ENCODE measurements at regions of chr1 and their contacts with region 1.

Region 1: DNA sequence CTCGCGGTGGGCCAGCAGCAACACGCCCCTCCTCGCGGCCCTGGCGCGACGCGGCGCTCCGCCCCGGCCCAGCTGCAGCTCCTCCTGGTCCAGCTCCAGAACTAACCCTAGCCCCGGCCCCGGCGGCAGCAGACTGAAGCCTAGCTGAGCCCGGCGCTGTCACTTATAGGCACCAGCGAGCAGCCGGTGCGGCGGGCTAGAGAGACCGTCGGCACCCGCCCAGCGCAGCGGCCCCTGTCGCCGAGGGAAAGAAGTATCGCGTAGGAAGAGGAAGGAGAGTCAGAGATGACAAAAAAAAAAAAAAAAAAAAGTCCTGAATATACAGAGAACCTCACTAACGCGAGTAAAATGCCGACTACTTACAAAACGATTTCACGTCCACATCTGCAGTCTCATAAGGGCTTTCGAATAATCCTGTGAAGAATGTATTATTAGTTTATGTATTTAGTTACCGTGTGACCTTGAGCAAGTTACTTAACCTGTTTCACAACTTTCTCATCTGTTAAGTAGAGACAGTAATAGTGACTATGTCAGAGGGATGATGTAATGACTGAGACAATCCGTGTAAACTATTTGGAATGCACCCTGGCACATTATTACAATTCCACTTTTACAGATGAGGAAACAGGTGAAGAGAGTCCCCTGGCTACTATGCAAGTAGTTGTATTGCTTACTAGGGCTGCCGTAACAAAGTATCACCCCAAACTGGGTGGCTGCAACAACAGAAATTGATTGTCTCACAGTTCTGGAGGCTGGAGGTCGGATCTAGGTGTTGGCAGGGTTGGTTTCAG is at the start of gene SLC9A1:
- DNase-seq: peak; percentile 88 to 96 (median 91)
- ATAC-seq: peak; percentile 94
- H3K4me3 ChIP-seq: peak within 1 kb of the TSS; percentile 75 to 83
- H3K4me3 Mint-ChIP-seq: peak within 1 kb of the TSS; percentile 81
- H3K27ac ChIP-seq: peak within 1 kb of the TSS; percentile 92 to 100
- H3K27ac Mint-ChIP-seq: peak within 1 kb of the TSS; percentile 99
- H3K4me1 ChIP-seq: peaks cover 40% of the 10 kb centered on the region
- H3K4me1 Mint-ChIP-seq: peaks cover 45% of the 10 kb centered on the region
- H3K27me3 ChIP-seq: no peaks in the 10 kb centered on the region
- H3K27me3 Mint-ChIP-seq: no peaks in the 10 kb centered on the region
- CTCF ChIP-seq: peak; percentile 82
- total RNA-seq, gene SLC9A1: 17.9 to 18.3 TPM

Region 2: DNA sequence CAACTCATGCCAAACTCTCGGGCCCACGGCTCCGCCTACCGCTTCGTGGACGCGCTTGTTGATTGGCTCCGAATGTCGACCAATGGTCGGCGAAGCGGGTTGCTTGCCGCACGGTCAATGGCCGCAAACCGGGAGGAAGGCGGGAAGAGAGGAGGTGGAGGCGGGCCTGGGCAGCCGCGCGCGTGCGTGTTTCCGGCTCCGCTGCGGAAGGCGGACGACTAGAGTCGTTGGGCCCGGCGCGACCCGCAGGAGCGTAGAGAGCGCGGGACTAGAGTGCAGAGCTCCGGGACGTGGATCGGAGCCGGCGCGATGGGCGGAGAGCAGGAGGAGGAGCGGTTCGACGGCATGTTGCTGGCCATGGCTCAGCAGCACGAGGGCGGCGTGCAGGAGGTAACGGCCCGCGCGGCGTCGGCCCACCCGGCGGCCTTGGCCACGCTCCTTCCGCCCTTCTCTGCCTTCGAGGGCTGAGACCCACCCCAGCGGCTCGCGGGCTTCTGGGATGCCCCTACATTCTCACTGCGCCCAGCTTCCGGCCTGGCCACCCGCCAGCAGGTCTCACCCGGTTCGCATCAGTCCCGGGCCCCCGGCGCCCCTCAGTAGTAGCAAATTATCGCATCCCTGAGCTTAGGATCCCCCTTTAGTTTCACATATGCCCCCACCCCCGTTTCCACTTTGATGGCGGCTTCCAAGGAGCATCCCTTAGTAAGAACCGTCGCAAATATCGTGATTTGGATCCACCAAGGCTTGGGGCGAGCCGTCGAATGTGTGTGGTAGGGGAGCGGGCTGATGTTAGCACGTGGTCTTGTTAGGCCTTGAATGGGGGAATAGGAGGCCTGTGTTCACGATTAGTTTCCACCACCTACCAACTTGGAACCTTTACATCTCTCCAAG is 233.4 kb before region 1 on chr1 and contains the start of gene NUDC:
- CTCF ChIA-PET with region 1: no interaction called
- POLR2A ChIA-PET with region 1: no interaction called
- intact Hi-C with region 1: loop called in 1 of 2 experiments (anchors 10 kb)
- DNase-seq: peak; percentile 91 to 98 (median 94)
- ATAC-seq: peak; percentile 92
- H3K4me3 ChIP-seq: peak within 1 kb of the TSS; percentile 84 to 95
- H3K4me3 Mint-ChIP-seq: peak within 1 kb of the TSS; percentile 95
- H3K27ac ChIP-seq: peak within 1 kb of the TSS; percentile 87 to 90
- H3K27ac Mint-ChIP-seq: peak within 1 kb of the TSS; percentile 99
- H3K4me1 ChIP-seq: peaks cover 23% of the 10 kb centered on the region
- H3K4me1 Mint-ChIP-seq: peaks cover 34% of the 10 kb centered on the region
- H3K27me3 ChIP-seq: no peaks in the 10 kb centered on the region
- H3K27me3 Mint-ChIP-seq: no peaks in the 10 kb centered on the region
- CTCF ChIP-seq: no peak
- total RNA-seq, gene NUDC: 51.9 to 55.0 TPM

Region 3: GRCh38 chr1:27136998-27137542 is 18.1 kb before region 1 on chr1:
- CTCF ChIA-PET with region 1: interaction called, 10 read pairs
- POLR2A ChIA-PET with region 1: interaction called, 112 read pairs
- intact Hi-C with region 1: loop called (anchors 1 kb)
- DNase-seq: peak; percentile 58 to 91 (median 81)
- ATAC-seq: peak; percentile 95
- H3K4me3 ChIP-seq: peak overlapping the region; percentile 41 to 45
- H3K4me3 Mint-ChIP-seq: peak overlapping the region; percentile 87
- H3K27ac ChIP-seq: peak overlapping the region; percentile 72 to 97
- H3K27ac Mint-ChIP-seq: peak overlapping the region; percentile 100
- H3K4me1 ChIP-seq: peaks cover 42% of the 10 kb centered on the region
- H3K4me1 Mint-ChIP-seq: peaks cover 61% of the 10 kb centered on the region
- H3K27me3 ChIP-seq: no peaks in the 10 kb centered on the region
- H3K27me3 Mint-ChIP-seq: no peaks in the 10 kb centered on the region
- CTCF ChIP-seq: no peak

Region 4: DNA sequence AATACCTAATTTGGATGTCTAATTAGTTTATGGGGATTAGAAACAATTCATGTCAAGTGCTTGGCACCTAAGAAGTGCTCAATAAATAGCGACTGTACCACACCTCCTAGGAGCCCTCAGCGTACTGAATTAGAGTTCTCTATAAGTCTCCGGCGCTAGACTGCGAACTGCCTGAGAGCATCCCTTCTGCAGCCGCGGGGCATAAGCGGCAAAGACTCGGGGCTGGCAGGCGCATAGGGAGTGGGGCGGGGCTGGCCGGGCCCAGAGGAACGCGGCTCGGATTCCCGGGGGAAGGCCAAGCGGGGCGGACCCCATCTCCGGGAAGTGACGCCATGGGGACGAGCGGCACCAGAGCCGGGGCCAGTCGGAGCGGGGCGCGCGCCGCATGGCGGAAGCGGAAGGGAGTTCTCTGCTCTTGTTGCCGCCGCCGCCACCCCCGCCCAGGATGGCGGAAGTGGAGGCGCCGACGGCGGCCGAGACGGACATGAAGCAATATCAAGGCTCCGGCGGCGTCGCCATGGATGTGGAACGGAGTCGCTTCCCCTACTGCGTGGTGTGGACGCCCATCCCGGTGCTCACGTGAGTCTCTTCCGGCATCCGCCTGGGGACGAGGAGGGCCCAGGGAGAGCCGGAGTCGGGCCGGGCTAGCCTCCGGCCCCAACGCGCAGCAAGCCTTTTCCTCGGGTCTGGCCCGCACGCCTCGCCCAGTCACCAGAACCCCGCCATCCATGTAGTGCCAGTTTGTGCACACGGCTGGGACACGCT is 166.8 kb after region 1 on chr1 and contains the start of gene TMEM222:
- CTCF ChIA-PET with region 1: no interaction called
- POLR2A ChIA-PET with region 1: no interaction called
- intact Hi-C with region 1: loop called (anchors 1 kb)
- DNase-seq: peak; percentile 95 to 99 (median 97)
- ATAC-seq: peak; percentile 93
- H3K4me3 ChIP-seq: peak within 1 kb of the TSS; percentile 95 to 99
- H3K4me3 Mint-ChIP-seq: peak within 1 kb of the TSS; percentile 98
- H3K27ac ChIP-seq: peak within 1 kb of the TSS; percentile 88 to 95
- H3K27ac Mint-ChIP-seq: peak within 1 kb of the TSS; percentile 97
- H3K4me1 ChIP-seq: peaks cover 40% of the 10 kb centered on the region
- H3K4me1 Mint-ChIP-seq: peaks cover 48% of the 10 kb centered on the region
- H3K27me3 ChIP-seq: no peaks in the 10 kb centered on the region
- H3K27me3 Mint-ChIP-seq: no peaks in the 10 kb centered on the region
- CTCF ChIP-seq: no peak
- total RNA-seq, gene TMEM222: 24.1 to 25.2 TPM

Region 5: DNA sequence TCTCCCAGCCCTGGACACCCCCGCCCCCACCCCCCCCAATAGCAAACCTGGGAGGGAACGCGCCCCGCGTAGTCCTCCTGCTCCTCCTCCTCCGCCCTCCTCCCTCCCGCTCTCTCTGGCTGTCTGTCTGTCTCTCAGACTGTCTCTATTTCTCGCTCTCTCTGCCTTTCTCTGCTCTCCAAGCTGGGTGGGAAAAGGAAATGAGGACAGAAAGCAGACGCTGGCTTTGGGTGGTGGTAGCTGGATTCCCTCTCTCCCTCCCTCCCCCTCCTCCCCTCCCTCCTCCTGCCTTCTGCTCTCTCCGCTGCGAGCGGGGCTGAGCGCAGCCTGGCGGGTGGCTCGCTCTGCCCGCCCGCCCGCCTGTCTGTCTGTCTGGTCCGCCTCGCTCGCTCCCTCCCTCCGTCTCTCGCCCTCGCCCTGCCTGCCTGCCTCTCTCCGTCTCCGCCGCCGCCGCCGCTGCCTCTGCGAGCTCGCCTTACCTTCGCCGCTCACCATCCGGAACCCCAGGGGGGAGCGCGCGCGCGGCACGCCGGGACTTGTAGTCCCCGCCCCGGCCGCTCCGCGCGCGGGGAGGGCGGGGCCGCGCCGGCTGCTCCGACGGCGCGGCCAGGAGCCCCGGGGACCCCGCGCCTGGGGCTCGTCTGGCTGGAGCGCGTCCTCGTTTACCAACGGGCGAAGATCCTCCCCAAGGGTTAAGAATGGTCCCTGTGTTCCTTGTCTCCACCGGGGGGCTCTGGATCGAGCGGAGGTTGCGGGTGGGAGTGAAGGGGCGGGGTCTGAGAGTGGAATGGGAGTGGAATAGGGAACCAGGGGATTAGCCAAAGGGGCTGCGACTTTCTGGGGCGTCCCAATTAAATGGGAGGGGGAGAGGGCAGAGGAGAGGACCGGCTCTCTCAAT is 448.7 kb after region 1 on chr1 and contains the start of gene AHDC1:
- CTCF ChIA-PET with region 1: no interaction called
- POLR2A ChIA-PET with region 1: no interaction called
- intact Hi-C with region 1: no loop called
- DNase-seq: peak; percentile 82 to 96 (median 93)
- ATAC-seq: peak; percentile 81
- H3K4me3 ChIP-seq: peak within 1 kb of the TSS; percentile 70 to 86
- H3K4me3 Mint-ChIP-seq: peak within 1 kb of the TSS; percentile 88
- H3K27ac ChIP-seq: peak within 1 kb of the TSS; percentile 57 to 66
- H3K27ac Mint-ChIP-seq: peak within 1 kb of the TSS; percentile 85
- H3K4me1 ChIP-seq: peaks cover 62% of the 10 kb centered on the region
- H3K4me1 Mint-ChIP-seq: peaks cover 41% of the 10 kb centered on the region
- H3K27me3 ChIP-seq: no peaks in the 10 kb centered on the region
- H3K27me3 Mint-ChIP-seq: no peaks in the 10 kb centered on the region
- CTCF ChIP-seq: no peak
- total RNA-seq, gene AHDC1: 19.5 to 21.1 TPM